Heart right ventricle (tissue), 16 donors: ENCODE measurements at regions of chr4 and their contacts with region 1.

Region 1: DNA sequence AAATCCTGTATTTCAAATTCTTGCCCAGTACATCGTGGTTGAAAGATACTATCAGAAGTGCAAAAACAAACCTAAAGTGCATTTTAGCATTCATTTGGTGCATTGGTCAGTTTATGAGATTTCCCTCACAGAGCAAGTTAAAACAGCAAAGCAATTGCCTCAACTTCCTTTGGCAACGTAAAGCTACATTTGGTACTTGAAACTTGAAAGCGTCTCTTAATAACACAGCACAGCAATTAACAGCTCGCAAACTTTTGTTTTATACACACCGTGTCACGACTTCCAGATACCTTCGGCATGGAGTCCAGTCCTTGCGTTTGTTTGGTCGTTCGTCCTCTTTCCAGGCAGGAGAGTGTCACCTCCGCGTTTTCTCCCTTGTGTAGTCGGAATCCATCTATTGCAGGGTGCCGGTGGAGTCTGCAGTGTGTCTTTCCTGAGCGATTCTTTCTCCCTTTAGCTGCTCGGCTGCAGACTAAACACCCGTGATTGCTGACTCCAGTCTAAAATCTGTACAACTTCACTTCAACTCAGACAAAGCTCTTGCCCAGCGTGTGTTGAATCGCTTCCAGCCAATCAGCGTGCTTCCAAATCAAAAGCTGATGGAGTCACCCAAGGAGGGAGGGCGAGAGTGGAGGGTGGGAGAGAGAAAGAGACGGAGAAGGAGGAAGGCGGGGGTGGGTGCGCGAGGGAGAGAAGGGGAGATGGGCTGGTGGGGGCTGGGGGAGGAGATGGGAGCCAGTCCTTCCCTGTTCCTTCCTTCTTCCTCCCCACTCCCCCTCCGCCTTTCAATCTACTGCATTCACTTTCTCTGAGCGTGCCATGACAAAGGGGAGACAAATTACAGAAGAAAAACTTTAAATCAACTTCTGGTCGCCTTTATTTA is at the start of gene PCDH18:
- DNase-seq: peak; percentile 75 to 92
- ATAC-seq: peak; percentile 82 to 95 (median 92)
- H3K4me3 ChIP-seq: peak within 1 kb of the TSS; percentile 24 to 69 (median 55)
- H3K27ac ChIP-seq: peak within 1 kb of the TSS; percentile 45 to 86 (median 80)
- H3K4me1 ChIP-seq: peaks cover 0 to 12% (median 0%) of the 10 kb centered on the region in 9 donors
- H3K27me3 ChIP-seq: peaks cover 0 to 5% (median 0%) of the 10 kb centered on the region in 7 donors
- CTCF ChIP-seq: no peak
- total RNA-seq, gene PCDH18: 2.6 to 7.4 (median 4.2) TPM

Region 2: DNA sequence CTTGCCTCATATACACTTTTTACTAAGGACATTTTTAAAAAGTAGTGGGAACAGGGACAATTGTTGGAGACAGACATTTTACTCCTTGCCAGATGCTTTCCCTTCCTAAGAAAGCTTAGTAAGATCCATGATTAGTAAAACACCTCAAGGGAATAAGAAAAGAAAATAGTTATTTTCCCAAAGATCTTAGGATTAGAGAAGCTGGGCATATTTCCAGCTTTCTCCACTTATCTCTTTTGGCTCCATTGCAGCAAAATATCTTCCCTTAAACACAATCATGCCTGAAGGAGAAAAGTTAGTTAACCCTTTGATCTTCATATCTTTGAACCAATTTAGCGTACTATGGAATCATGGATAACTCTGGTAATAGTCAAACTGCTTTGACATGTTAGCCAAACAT is 257.8 kb before region 1 on chr4:
- intact Hi-C with region 1: loop called in 1 of 10 experiments (anchors 5 kb)
- DNase-seq: no peak
- ATAC-seq: peak in 2 of 8 donors; percentile 39 to 52
- H3K4me3 ChIP-seq: no peak overlapping the region
- H3K27ac ChIP-seq: no peak overlapping the region
- H3K4me1 ChIP-seq: peaks cover 0 to 17% (median 0%) of the 10 kb centered on the region in 9 donors
- H3K27me3 ChIP-seq: no peaks in the 10 kb centered on the region
- CTCF ChIP-seq: no peak

Region 3: GRCh38 chr4:137601896-137602295 is 69.7 kb after region 1 on chr4:
- intact Hi-C with region 1: loop called in 3 of 10 experiments (anchors 5 to 10 kb)
- DNase-seq: no peak
- ATAC-seq: no peak
- H3K4me3 ChIP-seq: no peak overlapping the region
- H3K27ac ChIP-seq: no peak overlapping the region
- H3K4me1 ChIP-seq: peaks cover 0 to 8% (median 0%) of the 10 kb centered on the region in 9 donors
- H3K27me3 ChIP-seq: no peaks in the 10 kb centered on the region
- CTCF ChIP-seq: no peak

Region 4: DNA sequence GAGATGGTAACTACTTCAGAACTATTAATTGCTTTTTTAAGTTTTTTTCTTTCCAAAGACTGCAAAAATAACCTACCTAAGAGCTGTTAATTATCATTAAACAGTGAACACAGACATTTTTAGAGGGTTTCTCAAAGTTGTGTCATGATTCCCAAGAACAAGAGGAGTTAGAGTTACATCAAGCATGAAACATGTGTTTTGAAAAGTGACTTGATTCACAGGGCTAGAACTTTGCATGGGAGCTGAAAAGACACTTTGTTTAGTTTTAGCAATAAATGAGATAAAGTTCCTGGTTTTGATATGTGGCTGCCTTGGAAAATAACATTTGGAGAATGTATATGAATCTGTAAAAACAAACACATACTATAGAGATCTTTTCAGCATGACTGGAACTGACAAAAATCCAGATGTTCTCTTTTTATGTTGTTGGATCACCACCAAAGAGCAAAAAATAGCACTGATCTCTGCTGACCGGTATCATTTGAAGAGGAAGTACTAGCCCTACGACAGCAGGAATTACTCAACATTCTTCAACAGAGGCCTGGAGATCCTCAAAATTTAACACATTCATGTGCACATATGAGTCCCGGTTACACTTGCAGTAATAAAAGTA is 173.1 kb after region 1 on chr4:
- intact Hi-C with region 1: loop called in 2 of 10 experiments (anchors 10 kb)
- DNase-seq: peak in 1 of 2 donors; percentile 26
- ATAC-seq: peak; percentile 59 to 94 (median 86)
- H3K4me3 ChIP-seq: no peak overlapping the region
- H3K27ac ChIP-seq: peak overlapping the region in 8 of 10 donors; percentile 33 to 69 (median 57)
- H3K4me1 ChIP-seq: peaks cover 0 to 23% (median 13%) of the 10 kb centered on the region in 9 donors
- H3K27me3 ChIP-seq: no peaks in the 10 kb centered on the region
- CTCF ChIP-seq: no peak

Region 5: GRCh38 chr4:137754652-137755471 is 222.6 kb after region 1 on chr4:
- intact Hi-C with region 1: no loop called
- DNase-seq: no peak
- ATAC-seq: no peak
- H3K4me3 ChIP-seq: no peak overlapping the region
- H3K27ac ChIP-seq: no peak overlapping the region
- H3K4me1 ChIP-seq: no peaks in the 10 kb centered on the region
- H3K27me3 ChIP-seq: no peaks in the 10 kb centered on the region
- CTCF ChIP-seq: no peak